CD4-positive, alpha-beta T cell (primary cell): ENCODE measurements at regions of chr2 and their contacts with region 1.

Region 1: DNA sequence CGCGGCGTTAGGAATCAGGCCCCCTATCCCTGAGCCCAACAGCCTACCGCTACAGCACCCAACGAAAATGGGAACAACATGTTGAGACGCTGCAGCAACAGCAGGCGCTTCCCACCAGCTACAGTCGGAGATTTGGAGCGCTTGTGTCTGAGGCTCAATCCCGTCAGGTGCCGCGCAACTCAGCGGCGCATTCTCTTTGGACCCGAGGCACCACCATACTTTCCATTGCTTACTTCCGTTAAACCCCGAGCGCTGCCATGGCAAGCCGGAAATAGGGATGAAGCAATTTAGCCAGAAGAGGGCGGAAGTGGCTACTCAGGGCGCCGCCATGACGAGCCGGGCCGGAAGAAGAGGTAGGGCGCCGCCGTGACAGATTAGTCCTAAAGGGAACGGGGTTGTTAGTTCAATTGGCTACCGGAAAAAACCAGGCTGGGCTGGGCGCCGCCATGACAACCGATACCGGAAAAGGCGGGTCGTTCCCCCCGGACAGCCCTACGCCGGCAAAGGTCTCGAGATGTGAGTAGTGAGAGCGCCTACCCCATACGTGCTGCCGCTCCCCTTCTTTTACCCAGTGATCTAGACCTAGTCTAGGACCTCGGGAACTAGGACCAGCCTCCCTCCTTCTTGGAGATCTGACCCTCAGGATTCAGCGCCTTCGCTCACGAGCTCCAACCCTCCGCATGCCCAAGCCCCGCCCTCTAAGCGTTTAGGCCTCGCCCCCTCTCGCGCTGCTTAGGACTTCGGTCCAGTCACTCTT is at the start of gene CHCHD5:
- DNase-seq: peak; percentile 83 to 98 (median 90)
- ATAC-seq: peak; percentile 86
- H3K4me3 ChIP-seq: peak within 1 kb of the TSS; percentile 89
- H3K4me3 Mint-ChIP-seq: peak within 1 kb of the TSS; percentile 94
- H3K27ac ChIP-seq: peak within 1 kb of the TSS; percentile 66 to 92
- H3K27ac Mint-ChIP-seq: peak within 1 kb of the TSS; percentile 94
- H3K4me1 ChIP-seq: peaks cover 35% of the 10 kb centered on the region
- H3K4me1 Mint-ChIP-seq: peaks cover 44% of the 10 kb centered on the region
- H3K27me3 ChIP-seq: no peaks in the 10 kb centered on the region
- H3K27me3 Mint-ChIP-seq: no peaks in the 10 kb centered on the region
- CTCF ChIP-seq: no peak
- total RNA-seq, gene CHCHD5: 13.4 to 14.3 TPM

Region 2: DNA sequence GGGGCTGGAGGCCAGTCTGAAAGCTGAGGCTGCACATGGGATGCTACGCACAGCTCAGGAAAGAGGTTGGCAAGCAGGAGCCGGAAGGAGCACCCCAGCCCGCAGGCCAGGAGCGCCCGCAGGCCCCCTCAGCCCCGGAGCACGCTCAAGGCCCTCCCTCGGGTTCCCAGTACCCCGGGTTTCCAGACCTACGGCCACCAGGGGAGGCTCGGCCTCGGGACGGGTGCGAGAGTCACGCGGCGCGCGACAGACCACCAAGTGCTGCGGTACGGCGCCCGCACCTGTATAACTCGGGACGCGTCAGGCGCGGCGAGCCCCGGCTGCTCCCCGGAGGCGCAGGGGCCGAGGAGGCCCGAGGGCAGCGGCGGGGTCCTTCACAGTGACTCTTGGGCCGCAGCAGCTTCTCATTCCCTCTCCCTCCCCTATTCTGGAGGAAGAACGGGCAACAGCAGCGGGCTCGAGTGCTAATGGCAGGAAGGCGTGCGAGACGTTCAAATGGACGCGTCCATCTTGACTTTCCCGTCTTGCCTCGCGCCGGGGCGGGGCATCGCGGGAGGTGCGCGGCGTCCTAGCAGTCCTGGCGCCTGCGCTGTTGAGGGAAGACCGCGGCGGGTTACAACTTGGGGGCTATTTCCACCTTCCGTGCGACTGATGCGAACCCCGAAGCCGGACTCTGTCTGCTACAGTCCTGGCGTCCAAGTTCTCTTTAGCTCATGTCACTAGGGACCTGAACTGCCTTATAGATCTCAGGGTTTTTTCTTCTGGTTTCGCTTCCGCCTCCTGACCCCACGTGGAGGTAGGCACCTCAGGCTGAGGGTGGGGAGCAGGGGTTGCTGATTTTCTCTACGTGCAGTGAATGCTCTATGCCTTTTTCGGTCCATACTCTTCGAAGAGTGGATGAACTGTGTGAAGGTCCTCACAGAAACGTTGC is 700.4 kb before region 1 on chr2 and contains the start of gene ANAPC1:
- CTCF ChIA-PET with region 1: no interaction called
- POLR2A ChIA-PET with region 1: no interaction called
- intact Hi-C with region 1: loop called in 1 of 2 experiments (anchors 5 kb)
- DNase-seq: peak; percentile 72 to 90 (median 80)
- ATAC-seq: peak; percentile 96
- H3K4me3 ChIP-seq: peak within 1 kb of the TSS; percentile 83
- H3K4me3 Mint-ChIP-seq: peak within 1 kb of the TSS; percentile 90
- H3K27ac ChIP-seq: peak within 1 kb of the TSS; percentile 73 to 84
- H3K27ac Mint-ChIP-seq: peak within 1 kb of the TSS; percentile 93
- H3K4me1 ChIP-seq: peaks cover 17% of the 10 kb centered on the region
- H3K4me1 Mint-ChIP-seq: peaks cover 17% of the 10 kb centered on the region
- H3K27me3 ChIP-seq: no peaks in the 10 kb centered on the region
- H3K27me3 Mint-ChIP-seq: no peaks in the 10 kb centered on the region
- CTCF ChIP-seq: no peak
- total RNA-seq, gene ANAPC1: 34.0 to 39.5 TPM

Region 3: DNA sequence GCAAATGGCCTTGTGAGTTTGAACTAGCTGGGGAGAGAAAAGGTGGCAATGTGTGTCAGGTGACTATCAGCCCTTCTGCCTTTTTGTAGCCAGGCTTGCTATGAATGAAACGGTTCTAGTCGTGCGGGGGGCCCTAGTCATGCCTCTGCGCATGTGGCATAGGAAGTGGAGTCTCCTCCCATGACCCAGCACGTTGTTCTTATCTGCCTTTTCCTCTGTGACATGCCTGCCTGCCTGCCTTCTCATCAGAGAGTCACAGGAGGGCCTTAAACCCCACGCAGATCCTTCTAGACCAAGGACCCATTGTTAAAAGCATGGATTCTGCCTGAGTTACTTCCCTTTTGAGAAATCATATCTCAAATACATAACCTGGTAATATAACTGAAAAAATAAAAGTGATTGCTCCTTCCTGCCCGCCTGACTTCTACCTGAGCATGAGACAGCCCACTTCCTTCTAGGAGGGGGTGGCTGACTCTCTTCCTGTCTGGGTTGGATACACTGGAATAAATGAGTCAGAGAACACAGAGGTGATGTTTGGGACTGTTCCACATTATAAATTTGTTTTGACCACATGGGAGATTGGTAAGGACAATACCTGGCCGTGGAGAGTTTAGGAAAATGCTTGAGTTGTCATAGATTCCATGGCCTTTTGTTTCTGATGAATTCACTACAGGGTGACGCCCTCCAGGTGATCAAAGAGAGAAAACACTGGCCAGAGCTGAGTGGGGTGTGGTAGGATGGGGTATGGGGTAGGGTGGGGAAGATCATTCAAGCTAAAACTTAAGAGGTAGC is 396.3 kb before region 1 on chr2:
- CTCF ChIA-PET with region 1: no interaction called
- POLR2A ChIA-PET with region 1: no interaction called
- intact Hi-C with region 1: loop called in 1 of 2 experiments (anchors 10 kb)
- DNase-seq: peak; percentile 59 to 93 (median 72)
- ATAC-seq: peak; percentile 82
- H3K4me3 ChIP-seq: peak overlapping the region; percentile 28
- H3K4me3 Mint-ChIP-seq: peak overlapping the region; percentile 56
- H3K27ac ChIP-seq: peak overlapping the region; percentile 90 to 96
- H3K27ac Mint-ChIP-seq: peak overlapping the region; percentile 94
- H3K4me1 ChIP-seq: peaks cover 79% of the 10 kb centered on the region
- H3K4me1 Mint-ChIP-seq: peaks cover 84% of the 10 kb centered on the region
- H3K27me3 ChIP-seq: no peaks in the 10 kb centered on the region
- H3K27me3 Mint-ChIP-seq: no peaks in the 10 kb centered on the region
- CTCF ChIP-seq: no peak

Region 4: DNA sequence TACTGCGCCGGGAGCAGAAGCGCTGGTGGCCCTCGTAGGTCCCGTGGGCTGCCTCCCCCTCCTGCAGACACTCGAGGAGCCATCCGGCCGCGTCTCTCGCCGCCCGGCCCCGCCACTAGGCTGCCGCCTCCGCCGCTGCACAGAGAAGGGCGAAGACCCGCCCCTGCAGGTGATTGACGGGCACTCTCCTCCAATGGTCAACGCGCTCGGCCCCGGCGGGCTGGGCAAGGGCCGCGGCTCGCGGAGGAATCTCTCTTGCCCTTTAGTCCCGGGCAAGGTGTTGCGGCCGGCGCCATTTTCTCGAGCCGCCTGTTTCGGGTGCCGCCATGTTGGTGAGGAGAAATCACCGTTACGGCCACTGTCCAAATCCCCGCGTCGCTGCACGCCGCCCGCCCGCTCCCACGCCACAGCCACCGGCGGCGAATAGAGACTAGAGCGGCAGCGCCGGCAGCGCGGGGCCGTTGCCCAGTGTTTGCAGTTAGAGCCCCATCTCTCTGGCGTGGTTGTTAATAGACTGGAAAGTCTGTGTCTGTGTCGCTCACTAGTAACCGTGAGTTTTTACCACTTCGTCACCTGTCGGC is 308.9 kb before region 1 on chr2 and contains the start of gene ZC3H6:
- CTCF ChIA-PET with region 1: no interaction called
- POLR2A ChIA-PET with region 1: interaction called, 3 read pairs
- intact Hi-C with region 1: loop called in 1 of 2 experiments (anchors 5 kb)
- DNase-seq: peak; percentile 97 to 100 (median 100)
- ATAC-seq: peak; percentile 90
- H3K4me3 ChIP-seq: peak within 1 kb of the TSS; percentile 94
- H3K4me3 Mint-ChIP-seq: peak within 1 kb of the TSS; percentile 98
- H3K27ac ChIP-seq: peak within 1 kb of the TSS; percentile 100
- H3K27ac Mint-ChIP-seq: peak within 1 kb of the TSS; percentile 100
- H3K4me1 ChIP-seq: peaks cover 8% of the 10 kb centered on the region
- H3K4me1 Mint-ChIP-seq: peaks cover 33% of the 10 kb centered on the region
- H3K27me3 ChIP-seq: no peaks in the 10 kb centered on the region
- H3K27me3 Mint-ChIP-seq: no peaks in the 10 kb centered on the region
- CTCF ChIP-seq: no peak
- total RNA-seq, gene ZC3H6: 18.0 to 21.4 TPM

Region 5: DNA sequence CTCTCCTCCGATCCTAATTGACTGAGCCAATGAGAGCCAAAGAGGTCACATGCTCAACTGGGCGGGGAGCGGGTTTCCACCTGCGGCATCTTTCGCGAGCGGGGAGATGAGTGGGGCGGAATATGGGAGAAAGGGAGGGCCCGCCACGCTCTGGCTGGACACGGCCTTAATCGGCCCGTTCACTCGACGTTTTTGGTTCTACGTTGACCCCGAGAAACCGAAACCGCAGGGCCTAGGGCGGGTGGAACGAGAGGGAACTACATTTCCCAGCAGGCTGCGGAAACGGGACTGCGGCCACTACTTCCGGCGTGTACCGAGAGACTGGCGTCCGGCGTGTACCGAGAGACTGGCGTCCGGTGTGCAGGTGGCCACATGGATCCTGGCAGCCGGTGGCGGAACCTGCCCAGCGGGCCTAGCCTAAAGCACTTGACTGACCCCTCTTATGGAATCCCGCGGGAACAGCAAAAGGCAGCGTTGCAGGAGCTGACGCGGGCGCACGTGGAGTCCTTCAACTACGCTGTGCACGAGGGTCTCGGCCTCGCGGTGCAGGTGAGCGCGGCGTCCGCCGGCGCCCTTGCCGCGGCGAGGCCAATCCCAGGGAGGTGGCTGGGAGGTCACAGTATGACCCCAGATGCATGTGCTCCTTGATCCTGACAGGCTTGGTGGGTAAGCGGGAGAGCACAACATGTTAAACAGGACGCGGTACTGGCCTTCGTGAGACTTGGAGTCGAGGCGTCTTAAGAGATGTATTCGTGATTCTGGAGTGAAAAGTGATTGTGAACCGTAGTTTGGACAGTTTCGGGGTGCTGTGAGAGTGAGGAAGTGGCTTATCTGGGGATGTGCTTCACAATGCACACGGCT is 42.0 kb before region 1 on chr2 and contains the start of gene POLR1B:
- CTCF ChIA-PET with region 1: interaction called, 7 read pairs
- POLR2A ChIA-PET with region 1: interaction called, 5 read pairs
- intact Hi-C with region 1: loop called (anchors 1 to 2 kb)
- DNase-seq: peak in 13 of 14 experiments; percentile 54 to 85 (median 62)
- ATAC-seq: peak; percentile 81
- H3K4me3 ChIP-seq: peak within 1 kb of the TSS; percentile 94
- H3K4me3 Mint-ChIP-seq: no peak within 1 kb of the TSS
- H3K27ac ChIP-seq: peak within 1 kb of the TSS; percentile 81 to 93
- H3K27ac Mint-ChIP-seq: no peak within 1 kb of the TSS
- H3K4me1 ChIP-seq: peaks cover 24% of the 10 kb centered on the region
- H3K4me1 Mint-ChIP-seq: peaks cover 23% of the 10 kb centered on the region
- H3K27me3 ChIP-seq: no peaks in the 10 kb centered on the region
- H3K27me3 Mint-ChIP-seq: no peaks in the 10 kb centered on the region
- CTCF ChIP-seq: no peak
- total RNA-seq, gene POLR1B: 9.2 to 11.5 TPM

Region 6: DNA sequence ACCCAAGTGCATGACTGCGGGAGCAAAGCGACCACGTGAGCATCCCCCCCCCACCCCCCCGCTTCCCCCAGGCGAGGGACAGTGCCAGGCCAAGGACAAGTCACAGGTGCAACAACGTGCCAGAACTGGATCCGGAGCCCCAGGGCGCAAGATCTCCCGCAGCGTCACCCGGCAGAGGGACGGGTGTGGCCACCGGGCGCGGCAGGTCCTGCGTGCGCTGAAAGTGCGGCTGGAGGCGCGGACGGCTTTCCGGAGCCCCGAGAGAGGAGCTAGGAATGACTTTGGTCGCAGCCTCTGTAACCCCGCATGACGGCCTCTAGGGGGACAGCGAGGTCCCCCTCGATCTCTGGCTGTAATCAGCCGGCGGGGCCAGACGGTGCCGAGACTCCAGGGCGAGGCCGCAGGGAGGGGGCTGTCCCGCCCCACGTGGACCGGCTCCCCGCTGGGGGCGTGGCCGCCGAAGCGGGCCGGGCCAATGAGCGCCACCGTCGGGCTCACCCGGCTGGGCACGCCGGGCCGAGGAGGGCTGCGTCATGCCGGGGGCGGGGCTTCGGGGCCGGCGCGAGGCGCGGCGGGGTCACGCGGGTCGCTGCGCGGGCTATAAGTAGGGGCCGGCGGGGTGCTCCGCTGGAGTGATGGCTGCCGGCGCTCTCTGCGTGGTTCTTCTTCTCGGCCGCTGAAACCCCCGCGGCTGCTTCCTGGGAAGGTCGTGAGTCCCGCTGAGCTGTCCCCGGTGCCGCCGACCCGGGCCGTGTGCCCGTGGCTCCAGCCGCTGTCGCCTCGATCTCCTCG is 61.2 kb after region 1 on chr2 and contains the start of gene SLC20A1:
- CTCF ChIA-PET with region 1: interaction called, 3 read pairs
- POLR2A ChIA-PET with region 1: interaction called, 11 read pairs
- intact Hi-C with region 1: loop called in 1 of 2 experiments (anchors 5 kb)
- DNase-seq: peak; percentile 93 to 100 (median 98)
- ATAC-seq: peak; percentile 89
- H3K4me3 ChIP-seq: peak within 1 kb of the TSS; percentile 81
- H3K4me3 Mint-ChIP-seq: peak within 1 kb of the TSS; percentile 93
- H3K27ac ChIP-seq: peak within 1 kb of the TSS; percentile 79 to 85
- H3K27ac Mint-ChIP-seq: peak within 1 kb of the TSS; percentile 85
- H3K4me1 ChIP-seq: peaks cover 47% of the 10 kb centered on the region
- H3K4me1 Mint-ChIP-seq: peaks cover 54% of the 10 kb centered on the region
- H3K27me3 ChIP-seq: no peaks in the 10 kb centered on the region
- H3K27me3 Mint-ChIP-seq: no peaks in the 10 kb centered on the region
- CTCF ChIP-seq: peak; percentile 10
- total RNA-seq, gene SLC20A1: 130 to 139 TPM

Region 7: GRCh38 chr2:112674229-112674628 is 89.9 kb after region 1 on chr2:
- CTCF ChIA-PET with region 1: no interaction called
- POLR2A ChIA-PET with region 1: no interaction called
- intact Hi-C with region 1: no loop called
- DNase-seq: peak in 2 of 14 experiments; percentile 56 to 63
- ATAC-seq: no peak
- H3K4me3 ChIP-seq: no peak overlapping the region
- H3K4me3 Mint-ChIP-seq: no peak overlapping the region
- H3K27ac ChIP-seq: no peak overlapping the region
- H3K27ac Mint-ChIP-seq: no peak overlapping the region
- H3K4me1 ChIP-seq: no peaks in the 10 kb centered on the region
- H3K4me1 Mint-ChIP-seq: no peaks in the 10 kb centered on the region
- H3K27me3 ChIP-seq: no peaks in the 10 kb centered on the region
- H3K27me3 Mint-ChIP-seq: no peaks in the 10 kb centered on the region
- CTCF ChIP-seq: no peak